ENCODE measurements at regions of chr1 and their contacts with region 1.

Region 1: GRCh38 chr1:214328770-214329469 is 48.0 kb downstream of the SMYD2 start:
- DNase-seq: peak; percentile 80
- ATAC-seq: peak; percentile 92 to 93

Region 2: DNA sequence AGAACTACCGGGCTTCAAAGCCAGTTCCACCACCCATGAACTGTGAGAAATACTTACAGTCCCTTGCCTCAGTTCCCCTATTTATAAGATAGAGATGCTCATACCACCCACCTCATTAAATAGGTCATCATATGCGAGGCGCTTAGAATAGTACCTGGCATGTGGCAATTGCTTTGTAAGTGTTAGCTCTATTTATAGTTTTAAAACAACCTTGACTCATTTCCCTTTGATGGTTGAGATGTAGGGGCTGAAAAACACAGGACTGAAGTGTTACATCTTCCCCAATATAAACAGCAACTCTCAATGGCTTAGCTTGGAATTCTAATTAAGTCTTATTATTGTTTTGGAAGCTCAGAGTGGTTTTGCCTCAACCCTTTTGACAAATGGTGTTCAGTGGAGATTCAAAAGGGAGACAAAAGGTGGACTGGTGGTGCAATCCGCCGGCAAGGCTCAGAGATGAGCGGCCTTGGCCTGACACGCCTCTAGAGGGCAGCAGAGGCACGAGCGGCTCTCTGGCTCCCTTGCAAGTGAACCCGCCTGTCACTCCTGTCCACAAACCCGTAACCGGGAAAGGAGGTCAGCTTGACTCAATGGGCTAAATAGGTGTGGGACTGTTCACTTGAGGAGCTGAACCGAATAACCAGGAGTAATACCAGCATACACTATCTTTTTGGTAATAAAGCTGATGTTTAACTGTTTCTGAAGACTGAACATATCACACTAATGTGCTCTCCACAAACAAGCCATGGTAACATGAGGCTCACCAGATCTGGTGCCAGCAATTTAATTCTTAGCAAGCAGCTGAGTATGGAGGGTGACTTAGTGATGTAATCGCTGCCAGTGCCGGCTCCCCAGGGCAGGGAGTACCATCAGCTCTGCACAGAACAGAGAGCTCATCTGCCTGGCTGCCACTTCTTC is 67.5 kb before region 1 on chr1:
- intact Hi-C with region 1: loop called (anchors 1 to 5 kb)
- DNase-seq: peak; percentile 83
- ATAC-seq: peak; percentile 97

Measured in left cardiac atrium (tissue), 4 donors.